ENCODE measurements at regions of chr11 and their contacts with region 1.

Region 1: DNA sequence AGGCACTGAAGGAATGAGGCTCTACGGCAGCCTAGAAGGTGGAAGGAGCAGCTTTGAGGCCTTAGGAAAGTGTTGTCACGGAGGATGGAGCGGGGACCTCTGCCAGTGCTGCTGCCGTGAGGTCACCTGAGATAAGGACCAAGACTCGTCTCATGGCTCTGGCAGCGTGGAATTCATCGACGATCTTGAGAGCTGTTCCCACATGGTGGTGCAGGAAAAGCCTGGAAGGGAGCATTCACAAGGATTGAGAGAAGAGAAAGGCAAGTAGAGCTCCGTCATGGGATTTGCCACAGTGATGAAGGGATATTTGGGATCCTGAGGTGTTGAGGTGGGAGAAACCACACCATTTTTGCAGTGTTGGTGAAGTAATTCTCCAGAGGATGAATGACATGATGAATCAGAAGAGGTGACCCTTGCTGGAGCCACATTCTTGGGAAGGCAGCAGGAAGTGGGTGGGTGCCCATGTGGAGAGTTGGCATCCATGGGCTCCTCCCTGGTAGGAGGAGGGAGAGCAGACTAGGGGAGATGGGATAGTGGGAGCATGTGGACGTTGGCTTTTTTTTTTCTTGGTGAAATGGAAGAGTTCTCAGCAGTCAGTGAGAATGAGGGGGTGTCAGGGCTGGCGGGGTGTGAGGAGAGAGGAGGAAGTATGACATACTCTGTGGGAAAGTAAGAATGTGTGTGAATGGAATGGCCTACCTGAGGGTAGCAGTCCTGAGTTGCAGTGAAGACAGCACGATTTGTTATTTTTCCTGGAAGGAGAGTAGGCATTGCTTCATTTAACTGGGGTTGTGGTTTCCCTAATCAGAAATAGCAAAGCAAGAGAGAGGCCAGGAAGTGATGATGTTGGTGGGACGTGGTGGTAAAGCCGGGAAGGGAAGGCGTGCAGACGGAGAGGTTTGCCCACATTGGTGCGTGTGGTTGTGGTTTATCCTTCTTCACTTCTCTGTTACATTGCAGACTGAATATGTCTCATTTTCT is 11.1 kb downstream of the PPP6R3 start:
- DNase-seq: no peak
- ATAC-seq: no peak

Region 2: DNA sequence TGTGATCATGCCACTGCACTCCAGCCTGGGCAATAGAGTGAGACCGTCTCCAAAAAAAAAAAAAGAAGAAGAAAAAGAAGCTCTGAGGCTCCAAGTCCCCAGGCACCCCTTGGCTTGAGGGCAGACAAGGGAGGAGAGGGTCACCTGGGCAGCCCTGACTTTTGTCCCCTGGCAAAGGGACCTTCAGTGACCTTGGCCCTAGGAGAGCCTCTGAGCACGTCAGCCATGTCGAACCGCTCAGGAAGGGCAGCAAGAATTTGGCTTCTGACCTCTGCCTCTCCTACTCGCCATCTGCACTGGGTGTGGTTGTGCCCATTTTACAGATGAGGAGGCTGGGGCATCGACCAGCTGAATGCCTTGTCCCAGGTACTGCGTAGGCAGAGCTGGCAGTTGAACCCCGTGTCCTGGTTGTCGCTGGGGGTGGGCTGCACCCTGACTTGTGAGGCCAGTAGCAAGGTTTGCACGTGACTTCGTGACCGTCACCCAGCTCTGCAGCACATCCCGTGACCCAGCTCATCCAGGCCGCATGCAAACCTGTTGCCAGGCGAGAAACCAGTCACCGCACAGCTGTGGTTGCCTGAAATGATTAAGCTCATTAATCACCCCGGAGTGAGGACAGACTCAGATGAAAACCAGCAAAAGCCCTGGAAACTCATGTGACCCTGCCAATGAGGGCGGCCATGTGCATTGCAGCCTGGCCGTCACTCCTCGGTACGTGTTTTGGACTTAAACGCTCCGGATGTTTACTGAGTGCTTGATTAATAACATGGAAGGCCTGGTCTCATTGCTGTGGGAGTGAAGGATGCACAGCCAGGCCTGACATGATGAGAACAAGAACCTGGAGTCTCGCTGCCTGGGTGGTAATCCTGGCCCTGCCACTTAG is 58.8 kb before region 1 on chr11:
- intact Hi-C with region 1: no loop called
- DNase-seq: peak; percentile 62
- ATAC-seq: peak; percentile 76

Region 3: GRCh38 chr11:68546555-68546954 is 74.9 kb after region 1 on chr11:
- intact Hi-C with region 1: loop called (anchors 5 kb)
- DNase-seq: no peak
- ATAC-seq: no peak